K562 (cell line): ENCODE measurements at regions of chr11 and their contacts with region 1.

Region 1: GRCh38 chr11:74592441-74593362 is at the start of gene POLD3:
- DNase-seq: peak; percentile 86 to 96 (median 90)
- ATAC-seq: peak; percentile 98
- H3K4me3 ChIP-seq: peak within 1 kb of the TSS; percentile 88
- H3K27ac ChIP-seq: peak within 1 kb of the TSS; percentile 49
- H3K4me1 ChIP-seq: peaks cover 0 to 6% of the 10 kb centered on the region in 2 experiments; a peak in 3 of 5 replicates
- H3K27me3 ChIP-seq: 0 out of 5 replicates have a peak, but pooled peaks cover 0 to 2% of the 10 kb centered on the region in 2 experiments
- CTCF ChIP-seq: no peak
- EP300 ChIP-seq: peak; percentile 27; the same call in 1 of the 2 replicates
- POLR2A ChIP-seq: peak; percentile 74
- RAD21 ChIP-seq: no peak
- polyA plus RNA-seq, gene POLD3: 27.2 to 28.6 TPM

Region 2: DNA sequence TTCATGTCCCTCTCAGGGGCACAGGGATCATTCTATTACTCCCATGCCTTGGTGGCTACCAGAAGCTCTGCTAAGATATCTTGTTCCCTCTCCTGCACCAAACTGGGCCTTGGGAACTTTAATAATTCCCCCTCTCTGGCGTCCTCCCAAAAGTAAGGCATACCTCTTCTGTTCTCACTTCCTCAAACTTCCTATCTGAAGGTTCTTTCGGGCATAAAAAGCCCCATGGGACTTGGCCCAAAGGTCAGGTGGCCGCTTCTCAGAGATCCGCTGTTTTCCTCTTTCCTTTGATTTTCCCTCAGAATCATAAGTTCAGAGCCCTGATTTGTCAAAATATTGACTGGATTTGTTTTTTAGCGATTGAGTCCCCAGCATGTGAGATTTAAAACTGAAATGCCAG is 12.7 kb after region 1 on chr11:
- CTCF ChIA-PET with region 1: no interaction called
- POLR2A ChIA-PET with region 1: interaction called, 14 read pairs
- in situ Hi-C with region 1: no loop called
- intact Hi-C with region 1: no loop called
- DNase-seq: no peak
- ATAC-seq: no peak
- H3K4me3 ChIP-seq: no peak overlapping the region
- H3K27ac ChIP-seq: no peak overlapping the region
- H3K4me1 ChIP-seq: no peaks in the 10 kb centered on the region
- H3K27me3 ChIP-seq: no peaks in the 10 kb centered on the region
- CTCF ChIP-seq: no peak
- EP300 ChIP-seq: no peak
- POLR2A ChIP-seq: no peak
- RAD21 ChIP-seq: no peak